ENCODE measurements at regions of chr2 and their contacts with region 1.

Region 1: DNA sequence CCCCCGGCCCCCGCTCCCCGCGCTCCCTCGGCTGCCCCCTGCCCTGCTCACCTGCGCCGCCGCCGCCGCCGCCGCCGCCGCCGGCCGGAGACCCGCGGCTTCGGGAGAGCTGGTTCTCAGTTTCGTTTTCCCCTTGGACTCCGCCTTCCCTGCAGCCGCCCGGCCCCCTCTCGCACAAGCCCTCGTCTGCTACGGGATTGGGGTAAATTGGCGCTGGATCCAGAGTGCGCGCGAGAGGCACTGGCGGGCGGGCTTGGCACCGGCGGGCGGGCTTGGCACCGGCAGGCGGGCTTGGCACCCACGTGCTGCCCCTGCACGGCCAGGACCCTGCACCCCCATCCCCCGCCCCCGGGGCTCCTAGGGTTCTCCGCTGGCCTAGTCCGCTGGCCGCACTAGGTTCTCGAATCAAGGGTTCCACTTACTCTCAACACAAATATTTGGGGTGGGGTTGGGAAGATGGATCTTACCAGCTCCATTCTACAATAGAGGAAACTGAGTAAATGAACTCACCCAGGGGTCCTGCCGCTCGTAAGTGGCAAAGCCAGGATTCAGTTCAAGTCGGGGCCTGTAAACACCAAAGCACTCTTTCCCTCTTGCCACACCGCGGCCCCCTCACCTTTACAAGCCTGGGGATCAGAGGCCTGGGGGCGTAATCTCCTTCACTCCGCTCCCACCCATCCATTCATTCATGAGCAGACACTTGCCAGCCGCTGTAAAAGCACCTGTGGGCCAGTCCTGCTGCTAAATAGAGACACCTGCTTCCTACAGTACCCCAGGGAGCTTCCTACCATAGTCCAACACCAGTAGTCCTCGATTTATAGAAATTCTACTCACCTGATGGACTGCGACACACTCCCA is at the start of gene EIF2AK2:
- DNase-seq: peak; percentile 92
- H3K4me3 Mint-ChIP-seq: peak within 1 kb of the TSS; percentile 91
- H3K27ac Mint-ChIP-seq: peak within 1 kb of the TSS; percentile 94
- H3K4me1 Mint-ChIP-seq: peaks cover 44% of the 10 kb centered on the region
- H3K27me3 Mint-ChIP-seq: no peaks in the 10 kb centered on the region
- total RNA-seq, gene EIF2AK2: 136 to 142 TPM

Region 2: DNA sequence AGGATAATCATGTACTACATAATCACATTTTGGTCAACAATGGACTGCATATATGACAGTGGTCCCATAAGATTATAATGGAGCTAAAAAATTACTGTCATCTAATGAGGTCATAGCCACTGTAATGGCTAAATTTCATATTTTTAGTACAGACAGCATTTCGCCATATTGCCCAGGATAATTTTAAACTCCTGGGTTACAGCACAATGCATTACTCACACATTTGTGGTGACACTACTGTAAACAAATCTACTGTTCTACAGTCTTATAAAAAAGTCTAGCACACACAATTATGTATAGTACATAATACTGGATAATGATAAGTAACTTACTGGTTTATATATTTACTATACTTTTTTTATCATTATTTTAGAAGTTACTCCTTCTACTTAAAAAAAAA is 13.1 kb before region 1 on chr2:
- CTCF ChIA-PET with region 1: interaction called, 3 read pairs
- POLR2A ChIA-PET with region 1: interaction called, 18 read pairs
- DNase-seq: no peak
- H3K4me3 Mint-ChIP-seq: no peak overlapping the region
- H3K27ac Mint-ChIP-seq: no peak overlapping the region
- H3K4me1 Mint-ChIP-seq: peaks cover 12% of the 10 kb centered on the region
- H3K27me3 Mint-ChIP-seq: no peaks in the 10 kb centered on the region

Region 3: GRCh38 chr2:37168217-37168981 is 11.3 kb after region 1 on chr2:
- CTCF ChIA-PET with region 1: interaction called, 12 read pairs
- POLR2A ChIA-PET with region 1: interaction called, 4 read pairs
- DNase-seq: no peak
- H3K4me3 Mint-ChIP-seq: no peak overlapping the region
- H3K27ac Mint-ChIP-seq: no peak overlapping the region
- H3K4me1 Mint-ChIP-seq: no peaks in the 10 kb centered on the region
- H3K27me3 Mint-ChIP-seq: peaks cover under 1% of the 10 kb centered on the region

Region 4: DNA sequence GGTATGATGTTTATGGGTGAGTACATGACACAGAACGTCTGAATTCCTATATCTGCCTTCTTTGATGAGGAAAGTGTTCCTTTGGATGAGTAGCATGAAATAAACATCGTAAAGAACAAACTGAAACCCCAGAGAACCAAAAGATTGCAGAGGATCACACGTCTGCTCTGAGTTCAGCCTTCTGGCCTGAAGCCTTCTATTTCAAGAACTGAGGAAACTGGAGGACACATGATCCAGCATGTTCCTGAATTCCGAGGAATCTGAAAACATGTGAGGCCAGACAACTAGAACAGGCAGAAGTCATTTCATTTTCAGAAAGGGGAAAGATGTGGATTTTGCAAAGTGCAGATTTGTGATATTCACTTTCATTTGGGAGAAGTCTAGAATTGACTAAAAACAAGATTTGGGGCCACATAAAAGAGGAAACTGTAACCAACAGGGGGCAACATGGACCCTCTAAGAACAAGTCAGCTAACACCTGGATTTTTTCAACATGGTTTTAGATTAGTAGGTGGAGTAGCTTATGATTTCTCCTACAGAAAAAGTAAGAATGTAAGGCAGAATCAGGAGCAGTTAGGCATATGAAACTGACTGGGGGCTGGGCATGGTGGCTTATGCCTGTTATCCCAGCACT is 23.0 kb after region 1 on chr2:
- CTCF ChIA-PET with region 1: no interaction called
- POLR2A ChIA-PET with region 1: no interaction called
- DNase-seq: no peak
- H3K4me3 Mint-ChIP-seq: no peak overlapping the region
- H3K27ac Mint-ChIP-seq: no peak overlapping the region
- H3K4me1 Mint-ChIP-seq: no peaks in the 10 kb centered on the region
- H3K27me3 Mint-ChIP-seq: peaks cover 33% of the 10 kb centered on the region

Measured in activated CD4-positive, alpha-beta memory T cell treated with anti-CD3 and anti-CD28 coated beads, Interleukin-2, amount 10 ng/mL, durations not matched to agents 7 days and 5 days (primary cell).